Dendritic cell treated with granulocyte-macrophage colony-stimulating factor and Interleukin-4, amounts not matched to agents 40 ng/mL and 50 ng/mL, for 4 days (primary cell): ENCODE measurements at regions of chr1 and their contacts with region 1.

Region 1: GRCh38 chr1:225777583-225778336 is at the start of gene SRP9:
- H3K4me3 Mint-ChIP-seq: no peak within 1 kb of the TSS
- H3K27ac Mint-ChIP-seq: no peak within 1 kb of the TSS
- H3K4me1 Mint-ChIP-seq: peaks cover 40% of the 10 kb centered on the region
- H3K27me3 Mint-ChIP-seq: peaks cover 3% of the 10 kb centered on the region

Region 2: DNA sequence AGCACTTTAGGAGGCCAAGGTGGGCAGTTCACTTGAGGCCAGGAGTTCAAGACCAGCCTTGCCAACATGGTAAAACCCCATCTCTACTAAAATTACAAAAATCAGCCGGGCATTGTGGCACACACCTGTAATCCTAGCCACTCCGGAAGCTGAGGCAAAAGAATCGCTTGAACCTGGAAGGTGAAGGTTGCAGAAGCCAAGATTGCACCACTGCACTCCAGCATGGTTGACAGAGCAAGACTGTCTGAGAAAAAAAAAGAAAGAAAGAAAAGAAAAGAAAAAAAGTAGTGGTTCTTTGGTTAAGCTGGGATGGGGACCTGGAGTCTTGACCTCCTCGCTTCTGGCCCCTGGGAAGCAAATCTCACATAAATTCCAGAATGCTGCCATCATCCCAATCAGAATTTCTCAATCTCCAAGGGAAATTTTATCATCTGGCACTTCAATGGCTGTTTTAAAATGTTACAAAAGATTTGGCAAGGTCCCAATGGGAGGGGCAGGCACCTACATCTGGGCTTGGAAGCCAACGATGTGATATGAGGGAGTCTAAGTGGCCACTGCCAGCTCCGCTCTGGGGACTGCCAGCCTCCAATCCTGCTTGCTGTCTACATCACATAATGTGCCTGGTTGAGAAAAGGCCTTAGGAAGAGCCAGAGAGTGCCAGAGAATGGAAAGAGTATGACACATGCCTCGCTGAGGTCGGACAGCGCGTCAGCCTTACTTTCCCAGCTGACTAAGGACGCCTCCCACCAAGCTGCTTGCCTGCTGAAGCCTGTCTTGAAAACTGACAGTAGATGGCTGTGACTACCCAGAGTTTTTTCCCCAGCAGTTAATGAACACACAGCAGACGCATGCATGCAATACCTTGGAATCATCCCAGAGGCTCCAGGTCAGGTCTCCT is 42.3 kb before region 1 on chr1:
- intact Hi-C with region 1: no loop called
- H3K4me3 Mint-ChIP-seq: no peak overlapping the region
- H3K27ac Mint-ChIP-seq: no peak overlapping the region
- H3K4me1 Mint-ChIP-seq: no peaks in the 10 kb centered on the region
- H3K27me3 Mint-ChIP-seq: no peaks in the 10 kb centered on the region

Region 3: DNA sequence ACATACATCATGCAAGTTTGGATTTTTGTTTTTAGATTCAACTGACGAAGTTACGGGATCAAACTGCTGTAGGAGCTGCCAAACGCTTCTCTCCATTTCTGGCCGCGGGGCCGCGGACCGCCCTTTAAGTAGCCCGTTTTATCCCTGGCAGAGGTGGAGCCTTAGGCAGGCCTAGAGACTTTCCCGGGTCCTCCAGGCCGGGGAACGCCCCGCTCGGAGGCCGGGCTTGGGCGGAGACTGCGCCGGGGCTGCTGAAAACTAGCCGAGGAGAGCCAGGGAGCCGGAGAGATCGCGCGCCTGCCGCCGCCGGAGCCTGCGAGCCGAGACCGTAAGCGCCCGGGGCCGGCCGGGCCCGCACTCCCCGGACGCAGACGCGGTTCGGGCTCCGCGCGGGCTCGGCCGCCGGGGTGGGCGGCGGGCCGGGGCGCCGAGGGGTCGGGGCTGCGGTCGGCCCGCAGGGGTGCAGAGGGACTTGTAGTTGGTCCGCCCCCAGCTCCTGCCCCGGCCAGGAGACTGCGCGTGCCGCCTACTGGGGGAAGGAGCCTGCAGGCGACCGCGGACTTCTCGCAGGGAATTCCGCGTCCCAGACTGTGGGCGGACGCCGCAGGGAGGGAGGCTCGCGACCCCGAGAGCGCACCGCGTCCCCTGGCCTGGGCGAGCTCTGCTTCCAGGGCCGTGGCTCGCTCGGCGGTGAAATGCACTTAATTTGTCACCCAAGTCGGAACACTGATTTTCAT is 32.2 kb after region 1 on chr1 and contains the start of gene EPHX1:
- intact Hi-C with region 1: loop called (anchors 5 kb)
- H3K4me3 Mint-ChIP-seq: peak within 1 kb of the TSS; percentile 90
- H3K27ac Mint-ChIP-seq: peak within 1 kb of the TSS; percentile 82
- H3K4me1 Mint-ChIP-seq: peaks cover 60% of the 10 kb centered on the region
- H3K27me3 Mint-ChIP-seq: peaks cover 15% of the 10 kb centered on the region

Region 4: GRCh38 chr1:225845571-225846259 is 68.0 kb after region 1 on chr1:
- intact Hi-C with region 1: loop called (anchors 5 kb)
- H3K4me3 Mint-ChIP-seq: no peak overlapping the region
- H3K27ac Mint-ChIP-seq: no peak overlapping the region
- H3K4me1 Mint-ChIP-seq: peaks cover 31% of the 10 kb centered on the region
- H3K27me3 Mint-ChIP-seq: no peaks in the 10 kb centered on the region

Region 5: GRCh38 chr1:225881969-225882693 is 104.4 kb after region 1 on chr1 and contains the start of gene TMEM63A:
- intact Hi-C with region 1: loop called (anchors 10 kb)
- H3K4me3 Mint-ChIP-seq: peak within 1 kb of the TSS; percentile 95
- H3K27ac Mint-ChIP-seq: peak within 1 kb of the TSS; percentile 89
- H3K4me1 Mint-ChIP-seq: peaks cover 52% of the 10 kb centered on the region
- H3K27me3 Mint-ChIP-seq: peaks cover 15% of the 10 kb centered on the region

Region 6: DNA sequence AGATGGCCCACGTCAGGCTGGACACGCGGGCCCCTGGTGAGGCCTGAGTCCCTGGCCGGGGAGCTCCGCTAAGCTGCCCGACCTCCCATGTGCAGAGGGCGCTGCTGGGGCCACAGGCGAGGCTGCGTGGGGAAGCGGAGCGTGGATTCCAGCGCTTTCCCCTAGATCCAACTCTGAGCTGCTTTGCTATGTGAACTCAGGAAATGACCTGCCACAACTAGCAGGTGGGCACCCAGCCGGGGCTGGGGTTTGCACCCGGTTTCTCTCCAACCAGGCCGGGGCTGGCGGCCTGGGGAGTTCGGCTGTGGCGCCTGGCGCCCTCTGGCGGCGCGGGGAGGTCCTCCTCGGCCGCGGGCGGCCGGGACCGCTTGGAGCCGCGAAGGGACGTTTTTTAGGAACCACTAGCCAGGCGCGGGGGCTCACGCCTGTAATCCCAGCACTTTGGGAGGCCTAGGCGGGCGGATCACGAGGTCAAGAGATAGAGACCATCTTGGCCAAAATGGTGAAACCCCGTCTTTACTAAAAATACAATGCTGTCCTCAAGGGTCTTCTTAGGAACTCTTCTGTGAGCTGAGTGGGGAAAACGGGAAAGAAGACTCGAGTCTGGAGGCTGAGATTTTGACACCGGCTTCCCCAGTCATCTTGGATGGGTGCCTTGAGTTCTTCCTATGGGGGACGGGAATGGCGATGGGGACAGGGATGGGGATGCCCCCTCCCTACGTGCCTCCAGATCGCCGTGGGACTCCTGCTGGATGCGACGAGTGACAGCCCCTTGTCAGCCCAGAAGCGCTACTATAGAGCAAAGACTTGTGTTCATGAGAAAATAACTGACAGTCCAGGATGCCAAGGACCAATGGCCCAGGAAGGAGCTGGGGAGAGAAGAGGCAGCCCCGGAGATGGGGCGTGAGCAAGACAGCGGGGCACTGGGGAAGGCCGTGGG is 133.7 kb after region 1 on chr1:
- intact Hi-C with region 1: loop called (anchors 10 kb)
- H3K4me3 Mint-ChIP-seq: no peak overlapping the region
- H3K27ac Mint-ChIP-seq: no peak overlapping the region
- H3K4me1 Mint-ChIP-seq: no peaks in the 10 kb centered on the region
- H3K27me3 Mint-ChIP-seq: peaks cover 4% of the 10 kb centered on the region

Region 7: GRCh38 chr1:226407497-226408284 is 629.9 kb after region 1 on chr1 and contains the start of gene PARP1:
- intact Hi-C with region 1: loop called (anchors 10 kb)
- H3K4me3 Mint-ChIP-seq: peak within 1 kb of the TSS; percentile 99
- H3K27ac Mint-ChIP-seq: peak within 1 kb of the TSS; percentile 91
- H3K4me1 Mint-ChIP-seq: peaks cover 41% of the 10 kb centered on the region
- H3K27me3 Mint-ChIP-seq: no peaks in the 10 kb centered on the region